OCI-LY7 (cell line): ENCODE measurements at regions of chr13 and their contacts with region 1.

Region 1: GRCh38 chr13:112638157-112638750 is 50.3 kb upstream of the TUBGCP3 start:
- DNase-seq: no peak
- H3K4me3 ChIP-seq: no peak overlapping the region
- H3K27ac ChIP-seq: no peak overlapping the region
- H3K4me1 ChIP-seq: no peaks in the 10 kb centered on the region
- CTCF ChIP-seq: no peak

Region 2: GRCh38 chr13:112657850-112658444 is 19.7 kb after region 1 on chr13:
- CTCF ChIA-PET with region 1: no interaction called
- POLR2A ChIA-PET with region 1: no interaction called
- intact Hi-C with region 1: no loop called
- DNase-seq: no peak
- H3K4me3 ChIP-seq: no peak overlapping the region
- H3K27ac ChIP-seq: no peak overlapping the region
- H3K4me1 ChIP-seq: no peaks in the 10 kb centered on the region
- CTCF ChIP-seq: no peak

Region 3: GRCh38 chr13:112873851-112874750 is 235.8 kb after region 1 on chr13:
- CTCF ChIA-PET with region 1: no interaction called
- POLR2A ChIA-PET with region 1: no interaction called
- intact Hi-C with region 1: loop called (anchors 1 kb)
- DNase-seq: peak; percentile 56
- H3K4me3 ChIP-seq: no peak overlapping the region
- H3K27ac ChIP-seq: no peak overlapping the region
- H3K4me1 ChIP-seq: peaks cover 5% of the 10 kb centered on the region
- CTCF ChIP-seq: peak; percentile 75